HEK293T (cell line): ENCODE measurements at regions of chr17 and their contacts with region 1.

Region 1: DNA sequence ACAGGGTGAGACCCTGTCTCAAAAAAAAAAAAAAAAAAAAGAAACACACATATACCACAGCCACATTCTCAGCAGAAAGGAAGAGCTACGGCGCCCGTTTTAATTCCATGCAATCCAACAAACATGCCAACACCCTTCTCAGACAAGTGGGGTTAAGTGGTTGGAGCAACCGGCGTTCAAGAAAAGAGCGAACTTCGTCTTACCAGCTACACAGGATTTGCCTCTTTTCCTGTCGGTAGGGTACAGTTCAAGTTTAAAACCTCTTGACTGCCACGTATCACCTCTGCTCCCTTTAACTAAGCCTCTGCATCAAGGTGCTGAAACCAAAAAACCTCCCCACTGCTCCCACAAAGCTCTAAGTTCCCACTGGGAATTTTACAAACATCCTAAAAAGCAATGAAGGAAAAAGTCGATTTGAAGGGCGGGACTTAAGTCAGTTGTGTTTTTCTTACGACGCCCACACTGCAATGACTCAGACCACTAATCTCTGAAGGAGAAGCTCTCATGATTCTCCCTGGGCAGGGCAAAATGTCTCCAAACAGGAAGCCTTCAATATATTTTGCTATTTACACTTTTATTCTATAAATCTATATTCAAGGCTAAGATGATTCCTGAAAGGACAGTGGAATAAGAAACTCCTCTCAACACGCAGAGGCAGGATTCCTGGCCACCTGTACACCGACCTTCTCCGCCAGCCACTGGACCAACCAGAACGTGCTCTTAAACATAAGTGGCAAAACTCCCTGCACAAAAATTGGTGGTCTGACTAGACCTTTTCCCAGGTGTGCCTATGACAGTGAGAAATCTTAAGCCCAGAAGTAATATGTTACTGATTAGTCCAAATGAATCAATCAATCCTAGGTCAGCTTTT is 18.8 kb downstream of the SRP68 start:
- DNase-seq: no peak

Region 2: DNA sequence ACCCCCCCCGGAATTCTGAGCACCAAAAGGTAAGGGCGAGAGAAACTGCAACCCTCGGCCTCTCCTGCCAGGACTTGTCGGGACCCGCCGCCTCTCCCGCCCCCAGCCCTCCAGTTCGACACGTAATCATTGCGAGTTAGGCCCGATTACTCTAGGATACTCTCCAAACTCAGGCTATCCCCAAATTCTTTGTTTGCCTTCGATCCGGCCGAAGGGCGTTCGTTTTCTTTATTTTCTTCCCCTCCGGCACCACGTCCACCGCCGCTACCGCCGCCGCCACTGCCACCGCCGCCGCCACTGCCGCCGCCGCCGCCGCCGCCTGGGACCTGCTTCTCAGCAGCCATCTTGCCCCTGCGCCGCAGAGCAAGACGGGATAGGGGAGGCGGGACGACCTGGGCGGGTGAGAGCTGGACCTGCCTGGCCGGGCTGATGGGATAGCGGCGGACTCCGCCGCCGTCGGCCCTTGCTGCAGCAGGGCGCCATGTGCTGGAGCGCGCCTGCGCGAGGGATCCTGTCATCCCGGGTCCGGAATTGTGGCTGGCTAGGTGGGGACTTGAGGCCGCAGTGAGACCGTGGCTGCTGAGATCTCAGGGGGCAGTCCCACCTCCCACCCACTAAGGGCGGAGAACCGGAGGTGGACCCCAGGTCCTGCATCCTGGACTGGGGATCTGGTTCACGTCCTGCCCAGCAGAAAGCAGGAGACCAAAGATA is 18.8 kb after region 1 on chr17 and contains the start of gene SRP68:
- CTCF ChIA-PET with region 1: no interaction called
- POLR2A ChIA-PET with region 1: interaction called, 11 read pairs
- DNase-seq: peak; percentile 98

Region 3: GRCh38 chr17:76086021-76086783 is 32.7 kb after region 1 on chr17:
- CTCF ChIA-PET with region 1: no interaction called
- POLR2A ChIA-PET with region 1: no interaction called
- DNase-seq: no peak